MCF 10A (cell line): ENCODE measurements at regions of chr12 and their contacts with region 1.

Region 1: DNA sequence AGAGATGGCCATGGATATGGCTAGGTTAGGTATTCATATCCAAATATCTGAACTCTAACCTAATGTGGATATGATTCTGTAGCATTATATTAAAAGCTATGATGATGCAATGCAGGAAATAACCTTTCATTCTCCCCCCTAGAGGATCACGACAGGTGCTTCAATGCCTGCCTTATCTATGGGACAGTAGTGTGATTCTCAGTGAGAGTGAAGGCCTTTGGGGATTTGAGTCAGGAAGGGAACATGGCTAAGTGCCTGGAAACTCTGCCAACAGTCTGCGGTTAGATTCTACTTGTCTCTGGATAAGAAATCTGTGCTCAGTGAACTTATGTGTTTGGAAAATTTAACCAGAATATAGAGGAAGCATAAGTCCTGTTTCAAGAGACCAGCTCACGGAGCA is 81.8 kb downstream of the SLC38A1 start:
- DNase-seq: peak; percentile 79
- H3K4me3 Mint-ChIP-seq: no peak overlapping the region
- H3K27ac Mint-ChIP-seq: peak overlapping the region; percentile 30
- H3K4me1 Mint-ChIP-seq: peaks cover 16% of the 10 kb centered on the region
- H3K27me3 Mint-ChIP-seq: no peaks in the 10 kb centered on the region
- CTCF ChIP-seq: no peak

Region 2: DNA sequence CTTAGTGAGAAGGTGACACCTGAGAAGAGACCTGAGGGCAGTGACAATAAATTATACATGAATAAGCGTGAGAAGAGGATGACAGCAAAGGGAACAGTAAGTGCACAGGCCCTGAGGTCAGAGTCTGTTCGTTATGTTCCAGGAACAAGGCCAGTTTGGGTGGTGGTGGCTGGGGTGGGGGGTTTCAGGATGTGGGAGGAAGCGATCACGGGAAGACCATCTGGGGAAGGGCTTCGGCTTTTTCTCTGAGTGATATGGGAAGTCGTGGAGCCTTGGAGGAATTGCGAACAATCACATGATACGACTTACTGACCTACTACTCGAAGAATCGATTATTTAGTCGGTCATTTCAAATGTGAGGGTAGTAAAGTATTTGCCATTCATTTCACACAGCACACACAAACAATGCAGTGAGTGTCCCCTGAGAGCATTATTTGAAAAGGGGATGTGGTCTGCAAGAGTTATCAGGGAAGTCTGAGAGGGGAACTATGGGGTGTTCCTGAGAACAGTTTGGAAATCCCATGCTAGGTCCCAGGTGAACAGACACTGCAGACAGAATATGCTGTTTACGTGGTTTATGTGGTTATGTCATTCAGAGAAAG is 12.9 kb before region 1 on chr12:
- CTCF ChIA-PET with region 1: no interaction called
- POLR2A ChIA-PET with region 1: interaction called, 10 read pairs
- intact Hi-C with region 1: no loop called
- DNase-seq: no peak
- H3K4me3 Mint-ChIP-seq: no peak overlapping the region
- H3K27ac Mint-ChIP-seq: no peak overlapping the region
- H3K4me1 Mint-ChIP-seq: no peaks in the 10 kb centered on the region
- H3K27me3 Mint-ChIP-seq: no peaks in the 10 kb centered on the region
- CTCF ChIP-seq: no peak